BJ (cell line): ENCODE measurements at regions of chr12 and their contacts with region 1.

Region 1: DNA sequence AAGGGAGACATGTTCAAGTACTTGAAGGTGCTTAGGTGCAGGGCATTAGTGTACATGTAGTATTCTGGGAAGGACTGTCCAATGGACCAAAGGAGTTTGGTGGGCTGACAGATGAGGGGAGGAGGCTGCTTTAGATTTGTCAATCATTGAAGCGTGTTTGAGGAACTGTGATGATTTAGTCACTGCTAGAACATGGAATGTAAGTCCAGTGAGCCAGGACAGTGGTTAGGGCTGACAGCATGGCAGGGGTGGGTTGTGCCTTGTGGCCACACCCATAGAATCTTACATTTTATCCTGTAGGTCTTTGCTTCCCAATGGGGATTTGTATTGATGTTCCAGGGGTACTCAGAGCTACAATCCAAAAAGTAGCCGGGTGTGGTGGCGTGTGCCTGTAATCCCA is 24.6 kb downstream of the DIP2B start:
- DNase-seq: no peak
- H3K4me3 ChIP-seq: no peak overlapping the region
- H3K27me3 ChIP-seq: no peaks in the 10 kb centered on the region
- CTCF ChIP-seq: no peak

Region 2: GRCh38 chr12:50257686-50258551 is 271.4 kb before region 1 on chr12:
- CTCF ChIA-PET with region 1: no interaction called
- POLR2A ChIA-PET with region 1: no interaction called
- DNase-seq: no peak
- H3K4me3 ChIP-seq: no peak overlapping the region
- H3K27me3 ChIP-seq: no peaks in the 10 kb centered on the region
- CTCF ChIP-seq: no peak

Region 3: GRCh38 chr12:50302686-50303085 is 226.7 kb before region 1 on chr12:
- CTCF ChIA-PET with region 1: no interaction called
- POLR2A ChIA-PET with region 1: interaction called, 11 read pairs
- DNase-seq: peak; percentile 71
- H3K4me3 ChIP-seq: no peak overlapping the region
- H3K27me3 ChIP-seq: no peaks in the 10 kb centered on the region
- CTCF ChIP-seq: no peak

Region 4: GRCh38 chr12:50541139-50541538 is 11.8 kb after region 1 on chr12:
- CTCF ChIA-PET with region 1: no interaction called
- POLR2A ChIA-PET with region 1: interaction called, 11 read pairs
- DNase-seq: no peak
- H3K4me3 ChIP-seq: no peak overlapping the region
- H3K27me3 ChIP-seq: no peaks in the 10 kb centered on the region
- CTCF ChIP-seq: no peak